Cardiac septum (tissue), 1 donor: ENCODE measurements at regions of chr6 and their contacts with region 1.

Region 1: DNA sequence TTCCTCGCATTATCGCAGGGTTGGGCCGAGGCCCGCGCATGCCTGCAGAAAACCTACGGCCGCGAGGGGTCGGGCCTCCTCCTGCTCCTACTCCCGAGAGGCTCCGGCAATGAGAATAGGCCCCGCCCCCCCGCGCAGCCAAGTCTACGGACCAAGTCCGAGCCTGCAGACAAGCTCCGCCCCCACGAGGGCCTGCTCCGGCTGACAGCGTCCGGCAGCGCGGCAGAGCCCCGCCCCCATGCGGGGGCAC is 3.1 kb upstream of the GPSM3 start:
- DNase-seq: peak; percentile 100

Region 2: GRCh38 chr6:32127717-32128592 is 67.6 kb before region 1 on chr6 and contains the start of gene ATF6B:
- intact Hi-C with region 1: loop called (anchors 2 kb)
- DNase-seq: peak; percentile 99
- total RNA-seq, gene ATF6B: 40.8 TPM

Region 3: DNA sequence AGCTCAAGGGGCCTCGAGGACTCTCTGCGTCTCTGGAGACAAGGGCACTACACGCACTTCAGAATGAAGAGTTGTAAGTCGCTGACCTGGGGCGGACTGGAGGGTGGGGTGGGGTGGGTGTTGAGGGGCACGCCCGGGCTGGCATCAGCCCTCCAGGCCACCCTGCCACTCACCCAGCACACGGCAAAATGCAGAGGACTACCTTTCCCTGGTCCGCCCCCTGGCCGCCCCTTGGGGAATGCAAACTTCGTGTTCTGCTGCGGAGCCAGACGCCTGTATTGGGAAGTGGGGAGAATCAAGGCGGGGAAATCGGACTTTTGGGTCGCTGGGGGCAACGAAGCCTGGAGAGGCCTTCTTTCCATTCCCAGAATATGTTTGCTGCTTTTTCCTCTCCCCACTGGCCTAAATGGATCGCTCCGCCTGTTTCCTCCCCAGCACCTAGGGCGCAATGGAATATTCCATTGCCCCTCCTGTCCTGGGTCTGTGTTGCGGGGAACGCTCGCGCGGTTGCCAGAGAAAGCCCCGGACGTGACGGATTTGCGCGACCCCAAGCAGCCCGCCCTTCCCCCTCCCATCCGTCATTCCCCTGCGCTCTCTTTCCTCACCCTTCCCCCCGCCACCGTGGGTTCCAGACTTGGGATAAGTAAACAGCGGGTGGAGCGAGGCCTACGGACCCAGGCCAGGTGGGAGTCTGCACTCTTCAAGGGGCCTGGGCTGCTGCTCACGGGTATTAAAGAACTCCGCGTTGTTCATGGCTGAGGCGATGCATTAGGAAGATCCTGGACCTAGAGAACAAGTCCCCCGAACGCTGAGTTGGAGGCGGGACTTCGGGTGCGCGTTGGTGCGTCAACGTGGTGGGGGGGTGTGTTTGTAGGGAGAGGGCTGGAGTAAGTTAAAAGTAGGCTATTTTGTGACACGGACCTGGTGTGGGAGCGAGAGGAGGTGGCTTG is 41.7 kb before region 1 on chr6 and contains the start of gene PPT2:
- intact Hi-C with region 1: loop called (anchors 1 kb)
- DNase-seq: peak; percentile 91
- total RNA-seq, gene PPT2: 15.6 TPM

Region 4: DNA sequence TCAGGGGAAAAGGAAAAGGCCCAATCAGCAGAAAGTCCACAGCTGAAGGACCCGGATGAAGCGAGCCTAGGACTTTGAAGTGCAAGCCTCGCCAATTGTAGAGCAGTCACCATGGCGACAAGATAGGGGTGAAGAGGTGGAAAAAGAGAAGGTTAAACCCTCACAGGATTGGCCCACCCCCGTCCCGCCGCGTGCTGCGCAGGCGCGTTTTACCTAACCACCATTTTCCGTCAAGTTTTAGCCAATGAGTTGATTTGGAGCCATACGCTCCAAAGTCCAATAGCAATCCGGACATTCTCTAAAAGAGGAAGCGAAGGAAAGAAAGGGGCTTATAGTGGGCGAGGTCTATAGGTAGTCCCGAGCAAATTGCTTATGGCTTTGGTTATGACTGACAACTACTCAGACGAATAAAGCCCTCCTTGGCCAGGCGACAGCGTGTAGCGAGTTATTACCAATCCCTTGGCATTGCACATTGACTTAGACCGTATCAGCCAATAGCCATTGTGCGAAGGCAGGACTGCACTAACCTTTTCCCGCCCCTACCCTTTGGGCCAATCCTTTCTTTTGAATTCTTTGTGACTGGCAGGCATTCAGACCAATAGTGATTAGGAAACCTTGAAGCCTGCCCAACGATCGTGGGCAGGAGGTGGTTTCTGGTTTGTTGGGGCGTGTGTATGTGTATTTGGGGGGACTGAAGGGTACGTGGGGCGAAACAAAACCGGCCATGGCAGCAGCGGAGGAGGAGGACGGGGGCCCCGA is 17.6 kb before region 1 on chr6 and contains the start of gene RNF5:
- intact Hi-C with region 1: loop called (anchors 2 kb)
- DNase-seq: peak; percentile 96
- total RNA-seq, gene RNF5: 60.7 TPM

Region 5: GRCh38 chr6:32255199-32256153 is 59.9 kb after region 1 on chr6:
- intact Hi-C with region 1: loop called (anchors 5 kb)
- DNase-seq: peak; percentile 80

Region 6: DNA sequence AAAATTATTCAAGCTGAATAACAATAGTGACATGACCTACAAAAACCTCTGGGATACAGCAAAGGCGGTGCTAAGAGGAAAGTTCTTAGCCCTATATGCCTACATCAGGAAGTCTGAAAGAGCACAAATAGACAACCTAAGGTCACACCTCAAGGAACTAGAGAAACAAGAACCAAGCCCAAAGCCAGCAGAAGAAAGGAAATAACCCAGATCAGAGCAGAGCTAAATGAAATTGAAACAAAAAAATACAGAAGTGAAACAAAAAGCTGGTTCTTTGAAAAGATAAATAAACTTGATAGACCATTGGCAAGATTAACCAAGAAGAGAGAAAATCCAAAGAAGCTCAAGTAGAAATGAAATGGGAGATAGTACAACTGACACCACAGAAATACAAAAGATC is 75.9 kb after region 1 on chr6:
- intact Hi-C with region 1: no loop called
- DNase-seq: no peak